Thyroid gland (tissue), 4 donors: ENCODE measurements at regions of chr2 and their contacts with region 1.

Region 1: GRCh38 chr2:28958689-28959088 is 22.4 kb upstream of the TOGARAM2 start:
- DNase-seq: peak; percentile 75 to 77
- H3K4me3 ChIP-seq: no peak overlapping the region
- H3K27ac ChIP-seq: no peak overlapping the region
- H3K4me1 ChIP-seq: peaks cover 0 to 3% of the 10 kb centered on the region in 2 donors
- H3K27me3 ChIP-seq: no peaks in the 10 kb centered on the region
- CTCF ChIP-seq: peak in 5 of 6 experiments; percentile 12 to 85 (median 71)
- POLR2A ChIP-seq: no peak

Region 2: GRCh38 chr2:29195796-29196195 is 237.1 kb after region 1 on chr2:
- intact Hi-C with region 1: loop called (anchors 2 kb)
- DNase-seq: no peak
- H3K4me3 ChIP-seq: no peak overlapping the region
- H3K27ac ChIP-seq: no peak overlapping the region
- H3K4me1 ChIP-seq: no peaks in the 10 kb centered on the region
- H3K27me3 ChIP-seq: no peaks in the 10 kb centered on the region
- CTCF ChIP-seq: no peak
- POLR2A ChIP-seq: no peak

Region 3: DNA sequence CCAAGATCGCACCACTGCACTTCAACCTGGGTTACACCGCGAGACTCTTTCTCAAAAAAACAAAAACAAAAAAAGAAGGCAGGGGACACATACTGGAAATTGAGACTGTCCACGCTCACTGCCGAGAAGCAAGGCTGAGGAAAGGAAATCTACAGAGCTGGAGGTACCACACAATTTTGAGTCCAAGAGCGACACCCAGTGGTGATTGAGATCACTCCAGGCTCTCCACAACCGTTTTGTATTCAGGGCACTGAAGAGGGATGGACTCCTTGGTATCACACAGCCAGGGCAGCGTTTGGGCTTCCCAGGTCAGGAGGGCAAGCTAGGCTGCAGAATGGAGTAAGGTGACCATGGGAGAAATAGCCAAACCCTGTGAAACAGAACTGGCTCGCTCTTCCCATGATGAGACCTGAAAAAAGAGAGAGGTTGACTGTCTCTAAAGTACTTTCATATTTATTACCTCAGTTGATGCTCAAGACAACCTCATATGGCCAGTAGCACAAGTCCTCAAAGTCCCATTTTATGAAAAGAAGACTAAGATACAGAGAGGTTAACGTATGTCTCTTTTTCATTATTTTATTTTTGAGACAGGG is 1113.7 kb after region 1 on chr2:
- intact Hi-C with region 1: loop called (anchors 10 kb)
- DNase-seq: peak; percentile 69 to 73
- H3K4me3 ChIP-seq: no peak overlapping the region
- H3K27ac ChIP-seq: no peak overlapping the region
- H3K4me1 ChIP-seq: no peaks in the 10 kb centered on the region
- H3K27me3 ChIP-seq: no peaks in the 10 kb centered on the region
- CTCF ChIP-seq: peak in 5 of 6 experiments; percentile 33 to 77 (median 67)
- POLR2A ChIP-seq: no peak